ENCODE measurements at regions of chr3 and their contacts with region 1.

Region 1: DNA sequence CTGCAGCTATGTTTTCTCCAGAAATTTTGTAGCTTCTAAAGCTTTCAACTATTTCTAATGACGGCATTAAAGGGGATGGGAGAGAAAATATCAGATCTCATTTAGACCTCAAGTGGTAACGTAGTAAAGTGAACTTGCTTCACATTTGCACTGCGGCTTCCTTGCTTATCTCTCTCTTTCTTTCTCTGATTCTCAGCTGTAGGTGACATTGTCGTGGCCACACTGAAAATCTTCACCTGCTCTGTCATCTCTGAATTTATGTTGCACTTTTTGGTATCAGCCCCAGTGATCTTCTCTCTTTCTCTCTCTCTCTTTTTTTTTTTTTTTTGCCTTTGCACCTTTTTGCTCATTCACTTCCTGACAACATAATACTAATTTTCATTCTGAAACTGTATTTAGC is 254.1 kb upstream of the SATB1 start:
- DNase-seq: peak; percentile 55
- H3K4me3 Mint-ChIP-seq: peak overlapping the region; percentile 35
- H3K27ac Mint-ChIP-seq: peak overlapping the region; percentile 65
- H3K4me1 Mint-ChIP-seq: peaks cover 76% of the 10 kb centered on the region
- H3K27me3 Mint-ChIP-seq: no peaks in the 10 kb centered on the region

Region 2: GRCh38 chr3:18585004-18585968 is 94.0 kb before region 1 on chr3:
- intact Hi-C with region 1: loop called (anchors 1 kb)
- DNase-seq: no peak
- H3K4me3 Mint-ChIP-seq: no peak overlapping the region
- H3K27ac Mint-ChIP-seq: peak overlapping the region; percentile 77
- H3K4me1 Mint-ChIP-seq: peaks cover 19% of the 10 kb centered on the region
- H3K27me3 Mint-ChIP-seq: no peaks in the 10 kb centered on the region

Region 3: GRCh38 chr3:18649666-18650363 is 29.4 kb before region 1 on chr3:
- intact Hi-C with region 1: loop called (anchors 1 kb)
- DNase-seq: peak; percentile 49
- H3K4me3 Mint-ChIP-seq: peak overlapping the region; percentile 14
- H3K27ac Mint-ChIP-seq: peak overlapping the region; percentile 93
- H3K4me1 Mint-ChIP-seq: peaks cover 84% of the 10 kb centered on the region
- H3K27me3 Mint-ChIP-seq: no peaks in the 10 kb centered on the region

Region 4: DNA sequence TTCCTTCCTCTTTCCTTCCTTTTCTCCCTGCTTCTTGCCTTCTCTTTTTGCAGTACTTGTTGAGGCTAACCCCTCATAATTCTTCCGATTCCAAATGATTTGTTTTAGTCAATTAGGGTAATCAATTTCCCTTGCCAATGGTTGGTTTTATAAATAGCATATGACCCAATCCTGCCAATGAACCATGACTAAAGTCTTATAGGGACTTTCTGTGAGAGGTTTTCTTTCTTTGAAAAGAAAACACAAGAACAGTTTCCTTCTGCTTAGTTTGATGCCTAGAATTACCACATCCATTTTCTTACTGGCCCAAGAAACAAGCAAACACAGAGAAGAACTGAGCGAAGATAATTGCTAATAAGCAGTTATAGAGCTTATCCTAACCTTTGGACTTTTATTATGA is 38.4 kb after region 1 on chr3:
- intact Hi-C with region 1: loop called (anchors 1 kb)
- DNase-seq: no peak
- H3K4me3 Mint-ChIP-seq: peak overlapping the region; percentile 59
- H3K27ac Mint-ChIP-seq: peak overlapping the region; percentile 98
- H3K4me1 Mint-ChIP-seq: peaks cover 67% of the 10 kb centered on the region
- H3K27me3 Mint-ChIP-seq: no peaks in the 10 kb centered on the region

Region 5: GRCh38 chr3:18758047-18758704 is 78.9 kb after region 1 on chr3:
- intact Hi-C with region 1: loop called (anchors 1 kb)
- DNase-seq: peak; percentile 28
- H3K4me3 Mint-ChIP-seq: no peak overlapping the region
- H3K27ac Mint-ChIP-seq: peak overlapping the region; percentile 85
- H3K4me1 Mint-ChIP-seq: peaks cover 43% of the 10 kb centered on the region
- H3K27me3 Mint-ChIP-seq: no peaks in the 10 kb centered on the region

Region 6: GRCh38 chr3:18988614-18989229 is 309.5 kb after region 1 on chr3:
- intact Hi-C with region 1: loop called (anchors 1 kb)
- DNase-seq: no peak
- H3K4me3 Mint-ChIP-seq: peak overlapping the region; percentile 82
- H3K27ac Mint-ChIP-seq: peak overlapping the region; percentile 92
- H3K4me1 Mint-ChIP-seq: peaks cover 34% of the 10 kb centered on the region
- H3K27me3 Mint-ChIP-seq: peaks cover 3% of the 10 kb centered on the region